CD8-positive, alpha-beta T cell (primary cell): ENCODE measurements at regions of chr10 and their contacts with region 1.

Region 1: DNA sequence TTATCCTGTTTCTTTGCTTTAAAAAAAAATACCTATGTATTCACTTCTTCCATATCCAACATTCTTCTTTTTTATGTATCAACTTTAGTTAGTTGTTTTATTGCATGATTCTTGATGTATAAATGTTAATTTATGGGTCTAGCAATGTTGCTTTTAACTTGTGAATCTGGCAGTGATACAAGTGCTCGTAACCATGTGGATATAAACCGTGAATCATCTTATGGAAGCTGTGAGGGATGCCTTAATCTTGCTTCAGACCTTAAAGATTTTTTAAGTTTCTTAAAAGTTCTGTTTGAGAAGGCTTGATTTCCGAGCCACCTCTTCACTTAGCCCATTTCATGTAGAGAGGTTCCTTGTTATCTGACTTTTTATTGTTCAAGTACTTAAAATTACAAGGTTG is 25.9 kb downstream of the HELLS start:
- DNase-seq: no peak
- ATAC-seq: no peak
- H3K4me3 ChIP-seq: no peak overlapping the region
- H3K4me3 Mint-ChIP-seq: no peak overlapping the region
- H3K27ac ChIP-seq: no peak overlapping the region
- H3K27ac Mint-ChIP-seq: no peak overlapping the region
- H3K4me1 ChIP-seq: no peaks in the 10 kb centered on the region
- H3K4me1 Mint-ChIP-seq: no peaks in the 10 kb centered on the region
- H3K27me3 ChIP-seq: no peaks in the 10 kb centered on the region
- H3K27me3 Mint-ChIP-seq: no peaks in the 10 kb centered on the region
- CTCF ChIP-seq: no peak

Region 2: GRCh38 chr10:94533027-94533426 is 38.5 kb before region 1 on chr10:
- CTCF ChIA-PET with region 1: no interaction called
- POLR2A ChIA-PET with region 1: no interaction called
- intact Hi-C with region 1: no loop called
- DNase-seq: no peak
- ATAC-seq: no peak
- H3K4me3 ChIP-seq: no peak overlapping the region
- H3K4me3 Mint-ChIP-seq: no peak overlapping the region
- H3K27ac ChIP-seq: no peak overlapping the region
- H3K27ac Mint-ChIP-seq: no peak overlapping the region
- H3K4me1 ChIP-seq: no peaks in the 10 kb centered on the region
- H3K4me1 Mint-ChIP-seq: no peaks in the 10 kb centered on the region
- H3K27me3 ChIP-seq: no peaks in the 10 kb centered on the region
- H3K27me3 Mint-ChIP-seq: peaks cover 13% of the 10 kb centered on the region
- CTCF ChIP-seq: no peak

Region 3: DNA sequence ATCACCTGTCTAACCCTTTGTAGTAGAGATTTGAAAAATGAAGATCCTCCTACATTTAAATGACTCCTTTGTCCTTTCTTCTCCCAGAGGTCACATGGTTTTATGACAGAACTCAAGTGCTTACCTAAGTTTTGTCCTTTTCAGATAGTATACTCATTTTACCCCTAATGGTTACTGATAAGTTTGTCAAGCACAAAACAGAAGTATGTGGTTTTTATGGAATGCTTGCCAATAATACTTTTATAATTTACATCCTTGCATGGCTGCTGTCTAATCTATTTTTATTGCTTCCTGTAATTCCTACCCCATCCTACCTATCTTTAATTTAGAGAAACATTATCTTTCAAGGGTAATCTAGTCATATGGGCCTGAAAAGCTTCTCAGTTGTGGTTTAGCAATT is 11.6 kb after region 1 on chr10:
- CTCF ChIA-PET with region 1: no interaction called
- POLR2A ChIA-PET with region 1: no interaction called
- intact Hi-C with region 1: loop called in 1 of 2 experiments (anchors 2 kb)
- DNase-seq: no peak
- ATAC-seq: no peak
- H3K4me3 ChIP-seq: no peak overlapping the region
- H3K4me3 Mint-ChIP-seq: no peak overlapping the region
- H3K27ac ChIP-seq: no peak overlapping the region
- H3K27ac Mint-ChIP-seq: no peak overlapping the region
- H3K4me1 ChIP-seq: no peaks in the 10 kb centered on the region
- H3K4me1 Mint-ChIP-seq: no peaks in the 10 kb centered on the region
- H3K27me3 ChIP-seq: no peaks in the 10 kb centered on the region
- H3K27me3 Mint-ChIP-seq: no peaks in the 10 kb centered on the region
- CTCF ChIP-seq: no peak